HAP-1 (cell line): ENCODE measurements at regions of chr1 and their contacts with region 1.

Region 1: GRCh38 chr1:211829343-211830054 is 1.1 kb downstream of the LPGAT1 start:
- DNase-seq: peak; percentile 71 to 75
- H3K4me3 ChIP-seq: peak overlapping the region; percentile 50
- H3K4me1 ChIP-seq: peaks cover 11% of the 10 kb centered on the region
- H3K27me3 ChIP-seq: no peaks in the 10 kb centered on the region

Region 2: GRCh38 chr1:211705467-211706091 is 123.9 kb before region 1 on chr1:
- in situ Hi-C with region 1: loop called (anchors 10 kb)
- DNase-seq: no peak
- H3K4me3 ChIP-seq: no peak overlapping the region
- H3K4me1 ChIP-seq: no peaks in the 10 kb centered on the region
- H3K27me3 ChIP-seq: no peaks in the 10 kb centered on the region

Region 3: GRCh38 chr1:212124690-212125582 is 295.4 kb after region 1 on chr1:
- in situ Hi-C with region 1: no loop called
- DNase-seq: no peak
- H3K4me3 ChIP-seq: no peak overlapping the region
- H3K4me1 ChIP-seq: no peaks in the 10 kb centered on the region; the same call in 1 of the 2 replicates
- H3K27me3 ChIP-seq: no peaks in the 10 kb centered on the region

Region 4: DNA sequence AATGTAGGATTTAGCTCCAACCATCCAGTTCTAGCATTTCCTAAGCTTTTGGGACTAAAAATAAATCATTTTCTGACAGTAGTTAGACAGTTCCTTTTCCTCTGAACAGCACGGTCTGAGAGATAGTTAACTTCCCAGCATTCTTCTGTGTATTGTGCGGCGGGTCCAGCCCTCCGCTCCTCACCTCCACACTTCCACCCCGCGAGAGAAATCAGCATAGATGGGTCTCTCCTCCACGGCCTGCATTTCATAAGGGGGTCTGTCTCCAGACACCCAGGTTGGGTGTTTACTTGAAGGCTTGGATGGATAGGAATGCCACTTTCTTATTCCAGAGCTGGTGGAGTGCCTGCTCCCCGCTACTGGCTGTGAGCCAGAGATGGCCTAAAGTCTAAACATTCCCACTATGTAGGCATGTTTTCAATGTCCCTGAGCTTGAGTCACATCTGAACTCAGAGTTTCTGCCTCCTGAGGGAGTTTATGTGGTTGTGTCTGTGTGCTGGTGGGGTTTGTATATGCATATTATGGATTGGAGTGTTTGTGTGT is 417.8 kb after region 1 on chr1:
- in situ Hi-C with region 1: no loop called
- DNase-seq: no peak
- H3K4me3 ChIP-seq: no peak overlapping the region
- H3K4me1 ChIP-seq: no peaks in the 10 kb centered on the region
- H3K27me3 ChIP-seq: no peaks in the 10 kb centered on the region; the same call in 1 of the 2 replicates

Region 5: GRCh38 chr1:212760126-212760823 is 930.8 kb after region 1 on chr1:
- in situ Hi-C with region 1: no loop called
- DNase-seq: peak in 1 of 2 experiments; percentile 60
- H3K4me3 ChIP-seq: no peak overlapping the region
- H3K4me1 ChIP-seq: no peaks in the 10 kb centered on the region
- H3K27me3 ChIP-seq: no peaks in the 10 kb centered on the region